Mammary epithelial cell (primary cell): ENCODE measurements at regions of chr3 and their contacts with region 1.

Region 1: DNA sequence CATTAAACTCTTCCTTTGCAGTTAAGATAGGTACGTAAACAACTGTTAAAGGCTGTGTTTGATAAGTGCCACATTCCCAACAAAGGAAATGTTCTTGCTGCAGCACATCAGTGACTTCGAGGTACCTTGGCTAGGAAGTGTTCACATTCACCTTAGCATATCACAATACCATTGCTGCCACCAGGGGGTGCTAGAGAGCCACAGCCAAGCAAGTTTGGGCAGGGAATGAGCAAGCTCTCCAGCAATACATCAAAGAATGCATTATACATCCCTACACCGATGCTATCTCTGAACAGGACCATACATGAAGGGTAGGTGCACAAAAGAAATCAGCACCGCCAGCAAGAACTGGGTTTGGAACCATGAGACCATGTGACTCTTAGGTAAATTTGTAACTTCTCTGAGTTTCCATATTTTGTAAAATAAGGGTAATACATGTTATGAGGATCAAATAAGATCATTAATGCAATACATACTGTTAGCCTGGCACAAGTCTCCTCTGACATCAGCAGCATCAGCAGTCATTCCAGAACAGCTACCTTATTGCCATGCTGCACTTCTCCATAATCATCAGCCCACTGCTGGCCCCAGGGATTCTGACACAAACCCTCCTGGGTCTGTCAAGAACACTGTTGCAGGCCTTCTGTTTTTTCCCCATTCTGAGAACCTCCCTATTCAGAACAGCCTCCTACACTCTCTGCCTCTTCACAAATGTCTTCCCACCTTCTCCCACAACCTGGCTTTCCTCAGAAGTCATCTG is 37.6 kb downstream of the RYK start:
- DNase-seq: peak; percentile 83
- H3K4me3 ChIP-seq: no peak overlapping the region
- H3K27ac ChIP-seq: no peak overlapping the region
- H3K4me1 ChIP-seq: peaks cover 33% of the 10 kb centered on the region
- H3K27me3 ChIP-seq: no peaks in the 10 kb centered on the region
- CTCF ChIP-seq: peak; percentile 99 to 100

Region 2: GRCh38 chr3:133938770-133939462 is 274.2 kb before region 1 on chr3:
- CTCF ChIA-PET with region 1: no interaction called
- dilution Hi-C with region 1: no loop called
- in situ Hi-C with region 1: loop called in 1 of 2 experiments (anchors 25 kb)
- intact Hi-C with region 1: loop called (anchors 1 kb)
- DNase-seq: peak; percentile 60
- H3K4me3 ChIP-seq: no peak overlapping the region
- H3K27ac ChIP-seq: no peak overlapping the region
- H3K4me1 ChIP-seq: peaks cover 12% of the 10 kb centered on the region
- H3K27me3 ChIP-seq: peaks cover 17% of the 10 kb centered on the region
- CTCF ChIP-seq: peak; percentile 46 to 70

Region 3: DNA sequence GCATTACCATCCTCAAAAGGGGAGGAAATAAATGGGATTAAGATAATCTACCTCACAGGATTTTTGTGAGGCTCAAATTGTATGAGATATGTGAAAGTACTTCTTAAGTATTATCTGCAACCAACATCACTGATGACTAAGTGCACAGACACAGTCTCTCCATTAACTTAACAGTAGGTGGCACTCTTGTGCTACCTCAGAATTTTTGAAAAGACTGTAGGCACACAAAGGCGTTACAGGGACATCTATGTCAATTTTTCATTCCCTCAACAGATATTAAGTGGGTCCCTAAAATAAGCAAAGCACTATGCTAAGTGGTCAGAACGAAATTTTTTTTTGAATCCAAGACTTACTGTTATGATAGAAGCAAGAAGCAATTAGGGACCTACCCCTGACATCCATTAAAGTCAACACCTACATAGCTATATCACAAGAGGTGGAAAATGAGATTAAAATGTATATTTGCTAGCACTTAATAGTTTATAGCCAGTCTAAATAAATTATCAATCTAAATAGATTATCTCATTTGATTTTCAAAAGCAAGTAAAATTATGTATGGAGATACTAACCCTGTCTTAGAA is 15.3 kb before region 1 on chr3:
- CTCF ChIA-PET with region 1: interaction called, 13 read pairs
- dilution Hi-C with region 1: no loop called
- in situ Hi-C with region 1: no loop called
- intact Hi-C with region 1: loop called (anchors 1 kb)
- DNase-seq: peak; percentile 68
- H3K4me3 ChIP-seq: no peak overlapping the region
- H3K27ac ChIP-seq: no peak overlapping the region
- H3K4me1 ChIP-seq: peaks cover 50% of the 10 kb centered on the region
- H3K27me3 ChIP-seq: no peaks in the 10 kb centered on the region
- CTCF ChIP-seq: peak; percentile 71 to 76

Region 4: DNA sequence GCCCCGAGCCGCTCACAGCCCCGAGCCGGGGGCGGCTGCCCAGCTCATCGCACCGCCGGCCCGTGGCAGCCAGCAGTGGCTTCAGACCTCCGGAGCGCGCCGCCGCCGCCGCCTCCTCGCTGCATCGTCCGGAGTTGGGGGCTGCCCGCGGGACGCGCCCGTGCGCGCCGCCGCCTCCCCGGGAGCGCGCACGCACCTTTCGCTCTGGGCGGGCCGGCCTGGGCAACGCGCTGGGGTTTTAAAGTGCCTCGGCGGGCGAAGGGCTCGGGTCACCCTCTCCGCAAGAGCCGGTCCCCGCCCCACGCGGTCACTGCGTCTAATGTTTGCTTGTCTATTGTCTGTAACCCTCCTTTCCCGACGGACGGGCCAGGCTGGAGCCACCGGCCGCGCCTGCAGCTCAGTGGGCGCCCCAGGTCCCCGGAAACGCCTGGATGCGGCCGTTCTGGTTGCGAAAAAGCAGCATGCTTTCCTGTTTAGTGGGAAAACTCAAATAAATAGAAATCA is 37.7 kb after region 1 on chr3 and contains the start of gene RYK:
- CTCF ChIA-PET with region 1: no interaction called
- dilution Hi-C with region 1: no loop called
- in situ Hi-C with region 1: no loop called
- intact Hi-C with region 1: loop called (anchors 1 kb)
- DNase-seq: peak; percentile 78
- H3K4me3 ChIP-seq: peak within 1 kb of the TSS; percentile 62 to 76 (median 75)
- H3K27ac ChIP-seq: peak within 1 kb of the TSS; percentile 36
- H3K4me1 ChIP-seq: peaks cover 15% of the 10 kb centered on the region
- H3K27me3 ChIP-seq: no peaks in the 10 kb centered on the region
- CTCF ChIP-seq: no peak
- total RNA-seq, gene RYK: 76.3 to 171 TPM

Region 5: DNA sequence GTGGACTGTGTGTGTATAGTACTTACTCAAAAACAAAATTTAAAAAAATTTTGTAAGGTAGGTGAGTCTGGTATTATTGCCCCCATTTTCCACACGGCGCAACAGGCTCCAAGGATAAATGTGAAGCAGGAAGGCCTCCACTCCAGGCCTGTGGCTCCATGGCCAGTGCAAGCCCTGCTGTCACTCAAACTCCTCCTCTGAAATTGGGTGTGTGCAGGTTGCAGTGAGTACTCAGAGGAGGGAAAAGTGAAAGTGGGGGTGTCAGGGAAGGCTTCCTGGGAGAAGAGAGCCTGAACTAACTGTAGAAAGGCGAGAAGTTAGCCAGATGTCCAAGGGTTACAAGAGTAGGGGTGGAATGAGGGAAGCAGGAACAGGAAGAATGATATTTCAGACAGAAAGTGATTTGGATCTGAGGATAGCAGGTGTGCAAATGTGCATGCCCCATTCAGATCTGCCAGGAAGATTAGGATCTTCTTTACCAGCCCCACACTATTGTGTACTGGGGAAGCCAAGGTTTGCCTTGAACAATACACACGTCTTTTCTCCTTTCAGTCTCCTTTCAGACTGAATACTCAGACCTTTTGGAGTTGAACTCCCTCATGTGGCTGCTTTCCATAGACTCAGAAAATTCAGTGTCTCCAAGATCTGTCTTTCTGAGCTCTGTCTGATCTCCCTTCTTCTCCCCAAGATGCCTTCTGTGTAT is 86.2 kb after region 1 on chr3:
- CTCF ChIA-PET with region 1: interaction called, 4 read pairs
- dilution Hi-C with region 1: no loop called
- in situ Hi-C with region 1: loop called (anchors 5 to 10 kb)
- intact Hi-C with region 1: loop called (anchors 1 kb)
- DNase-seq: peak; percentile 27
- H3K4me3 ChIP-seq: no peak overlapping the region
- H3K27ac ChIP-seq: no peak overlapping the region
- H3K4me1 ChIP-seq: peaks cover 3% of the 10 kb centered on the region
- H3K27me3 ChIP-seq: no peaks in the 10 kb centered on the region
- CTCF ChIP-seq: peak; percentile 10 to 62

Region 6: DNA sequence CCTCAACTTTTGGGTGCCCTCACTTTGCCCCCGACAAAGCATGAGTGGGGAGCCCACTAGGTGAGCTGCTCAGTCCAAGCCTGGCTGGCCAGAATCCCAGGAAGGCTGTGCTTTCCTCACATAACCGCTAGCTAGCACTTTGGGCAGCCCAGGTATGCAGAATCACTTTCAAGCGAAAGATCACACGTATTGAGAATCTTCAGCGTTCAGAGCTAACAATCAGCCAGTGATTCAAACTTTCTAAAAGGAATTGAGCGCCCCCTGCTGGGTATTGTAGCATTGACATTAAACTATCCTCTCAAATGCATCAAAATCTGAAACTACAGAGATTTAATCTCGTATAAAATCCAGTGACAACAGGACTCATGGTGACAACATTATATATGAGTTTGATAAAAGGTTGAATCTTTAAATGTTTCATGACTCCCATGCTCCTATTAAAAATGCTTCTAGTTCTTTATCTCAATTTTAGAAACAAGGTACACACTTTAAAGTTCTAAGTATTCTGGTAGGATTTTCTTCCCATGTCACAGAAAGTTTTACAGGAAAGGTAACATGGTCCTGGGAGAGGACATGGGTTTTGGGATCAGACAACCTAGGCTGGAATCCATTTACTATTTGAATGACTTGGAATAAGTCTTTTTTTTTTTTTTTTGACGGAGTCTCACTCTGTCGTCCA is 260.9 kb after region 1 on chr3:
- CTCF ChIA-PET with region 1: interaction called, 5 read pairs
- dilution Hi-C with region 1: no loop called
- in situ Hi-C with region 1: loop called in 1 of 2 experiments (anchors 10 kb)
- intact Hi-C with region 1: loop called (anchors 1 kb)
- DNase-seq: peak; percentile 82
- H3K4me3 ChIP-seq: no peak overlapping the region
- H3K27ac ChIP-seq: peak overlapping the region; percentile 49
- H3K4me1 ChIP-seq: peaks cover 58% of the 10 kb centered on the region
- H3K27me3 ChIP-seq: no peaks in the 10 kb centered on the region
- CTCF ChIP-seq: peak; percentile 60 to 70

Region 7: DNA sequence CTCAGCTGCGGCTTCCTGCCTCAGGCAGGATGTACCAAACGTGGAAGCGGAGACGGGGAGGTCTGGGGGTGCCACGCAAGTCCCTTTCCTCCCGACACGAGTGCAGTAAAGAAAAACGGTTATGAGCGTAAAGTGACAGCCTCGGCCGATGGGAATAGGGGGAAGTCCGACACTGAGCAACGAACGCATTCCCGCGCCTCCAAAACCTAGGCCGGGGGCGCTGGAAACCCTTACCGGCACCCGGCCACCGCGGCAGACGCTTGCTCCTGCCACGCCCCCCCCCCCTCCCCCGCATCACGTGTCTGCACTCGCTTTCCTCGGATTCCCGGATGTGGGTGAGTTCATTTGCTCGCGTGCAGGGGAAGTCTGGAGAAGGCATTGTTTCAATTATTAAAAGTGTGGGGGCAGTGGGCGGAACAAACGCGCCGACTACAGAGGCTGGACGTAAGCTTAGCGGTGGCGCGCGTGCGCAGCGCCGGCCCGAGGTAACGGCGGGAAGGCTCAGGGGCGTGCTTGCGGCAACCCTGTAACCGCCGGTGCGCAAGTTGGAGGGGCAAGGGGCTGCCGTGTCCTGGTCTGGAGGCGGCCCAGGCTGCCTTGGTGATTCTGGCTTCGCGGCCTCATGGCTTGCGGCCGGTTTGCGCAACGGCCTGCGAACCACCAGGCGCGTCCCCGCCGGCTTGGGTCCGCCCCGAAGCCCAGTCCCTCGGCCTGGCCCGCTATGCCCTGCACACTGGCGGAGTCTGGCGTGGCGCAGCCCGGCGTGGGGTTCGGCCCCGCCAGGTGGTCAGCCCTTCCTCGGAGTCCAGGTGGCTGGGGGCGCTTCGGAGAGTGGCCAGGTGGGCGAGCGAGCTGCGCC is 272.9 kb after region 1 on chr3 and contains the starts of genes ANAPC13 and CEP63:
- CTCF ChIA-PET with region 1: no interaction called
- dilution Hi-C with region 1: no loop called
- in situ Hi-C with region 1: loop called in 1 of 2 experiments (anchors 10 kb)
- intact Hi-C with region 1: no loop called
- DNase-seq: peak; percentile 98
- H3K4me3 ChIP-seq: peak within 1 kb of the TSS; percentile 70 to 90 (median 76)
- H3K27ac ChIP-seq: peak within 1 kb of the TSS; percentile 87
- H3K4me1 ChIP-seq: peaks cover 38% of the 10 kb centered on the region
- H3K27me3 ChIP-seq: no peaks in the 10 kb centered on the region
- CTCF ChIP-seq: no peak
- total RNA-seq, gene ANAPC13: 32.2 to 40.5 TPM
- total RNA-seq, gene CEP63: 7.2 to 25.3 TPM

Region 8: DNA sequence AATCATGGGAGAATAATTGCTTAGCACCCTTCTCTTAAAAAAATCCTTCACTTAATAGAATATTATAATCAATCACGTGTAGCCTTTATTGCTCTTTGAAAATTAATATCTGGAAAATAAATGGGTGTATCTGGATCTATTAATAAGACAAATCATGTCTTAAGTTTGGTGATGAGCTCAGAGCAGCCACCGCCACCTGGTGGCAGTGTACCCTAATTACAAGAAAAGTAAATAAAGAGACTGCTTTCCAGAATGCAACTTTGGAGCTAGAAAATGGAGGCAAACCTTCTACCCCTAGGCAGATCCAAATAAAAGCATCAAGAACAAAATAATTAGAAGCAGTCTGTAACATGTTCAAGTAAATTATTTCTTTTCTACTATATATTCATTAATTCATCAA is 625.5 kb after region 1 on chr3:
- CTCF ChIA-PET with region 1: no interaction called
- dilution Hi-C with region 1: no loop called
- in situ Hi-C with region 1: no loop called
- intact Hi-C with region 1: no loop called
- DNase-seq: no peak
- H3K4me3 ChIP-seq: no peak overlapping the region
- H3K27ac ChIP-seq: no peak overlapping the region
- H3K4me1 ChIP-seq: no peaks in the 10 kb centered on the region
- H3K27me3 ChIP-seq: no peaks in the 10 kb centered on the region
- CTCF ChIP-seq: peak; percentile 20 to 36